ENCODE measurements at regions of chr20 and their contacts with region 1.

Region 1: DNA sequence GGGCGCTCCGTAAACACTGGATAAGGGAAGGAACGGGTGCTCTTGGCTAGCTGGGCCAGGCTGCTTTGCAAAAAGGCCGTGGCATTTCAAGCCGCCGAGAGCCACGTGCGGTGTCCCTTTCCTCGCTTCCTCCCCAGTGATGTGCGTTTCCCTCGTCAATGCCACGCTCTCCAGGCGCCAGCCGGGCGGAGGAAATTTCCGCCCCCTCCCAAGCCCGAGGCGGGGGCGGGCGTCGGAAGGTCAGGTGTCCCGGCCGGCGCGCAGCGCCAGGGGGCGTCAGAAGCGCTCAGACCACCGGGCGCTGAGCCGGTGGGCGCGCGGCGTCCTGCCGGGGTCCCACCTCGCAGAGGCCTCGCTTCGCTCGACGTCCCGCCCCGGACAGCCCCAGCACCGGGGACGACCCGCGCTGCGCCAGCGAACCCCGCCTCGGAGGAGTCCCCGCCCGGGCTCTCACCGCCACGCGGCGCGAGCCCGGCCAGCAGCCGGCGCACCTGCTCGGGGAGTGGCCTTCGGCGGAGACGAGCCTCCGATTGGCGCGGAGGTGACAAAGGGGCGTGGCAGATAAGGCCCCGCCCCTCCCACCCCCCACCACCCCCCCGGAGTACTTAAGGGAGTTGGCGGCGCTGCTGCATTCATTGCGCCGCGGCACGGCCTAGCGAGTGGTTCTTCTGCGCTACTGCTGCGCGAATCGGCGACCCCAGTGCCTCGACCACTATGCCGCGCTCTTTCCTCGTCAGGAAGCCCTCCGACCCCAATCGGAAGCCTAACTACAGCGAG is at the start of gene SNAI1:
- DNase-seq: peak; percentile 84 to 90 (median 87)
- ATAC-seq: peak; percentile 67 to 91 (median 85)
- H3K4me3 ChIP-seq: peak within 1 kb of the TSS; percentile 23 to 78 (median 60)
- H3K27ac ChIP-seq: peak within 1 kb of the TSS; percentile 3 to 86 (median 78)
- H3K4me1 ChIP-seq: peaks cover 0 to 60% (median 37%) of the 10 kb centered on the region in 12 donors
- H3K27me3 ChIP-seq: no peaks in the 10 kb centered on the region
- CTCF ChIP-seq: peak; percentile 23 to 85 (median 62)
- POLR2A ChIP-seq: peak in 1 of 2 donors; percentile 86
- total RNA-seq, gene SNAI1: 0.37 to 6.7 (median 1.6) TPM

Region 2: DNA sequence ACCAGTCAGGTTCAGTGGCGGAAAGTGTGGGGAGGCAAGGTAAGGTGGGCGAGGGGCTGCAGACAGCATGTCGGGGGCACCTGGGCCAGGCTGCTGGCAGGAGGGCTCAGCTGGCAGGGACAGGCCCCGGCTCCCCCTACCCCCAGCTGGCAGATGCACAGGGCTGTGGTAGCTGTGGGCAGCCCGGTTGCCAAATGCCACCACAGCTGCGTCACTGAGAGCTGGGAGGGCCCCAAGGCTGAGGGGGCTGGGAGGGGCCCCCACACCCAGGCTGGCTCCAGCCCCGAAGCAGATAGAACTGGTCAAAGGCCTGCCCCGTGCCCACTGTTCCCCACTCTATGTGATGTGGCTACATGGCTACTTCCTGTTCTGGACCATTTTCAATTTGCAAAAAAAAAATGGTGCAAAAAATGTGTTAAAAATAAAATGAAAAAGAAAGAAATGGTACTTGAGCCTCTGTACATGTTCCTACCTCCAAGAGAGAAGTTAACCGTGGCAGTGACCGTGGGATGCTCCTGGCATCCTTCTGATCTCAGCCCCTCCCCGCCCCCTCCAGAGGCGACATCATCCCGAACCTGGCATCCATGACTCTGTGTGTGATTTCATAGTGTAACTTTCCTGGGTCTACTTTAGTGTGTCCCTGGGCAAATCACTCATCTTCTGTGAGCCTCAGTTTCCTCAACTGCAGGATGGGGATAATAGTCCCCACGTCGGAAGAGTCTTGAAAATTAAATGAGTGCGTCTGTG is 66.1 kb after region 1 on chr20:
- intact Hi-C with region 1: loop called in 1 of 10 experiments (anchors 2 kb)
- DNase-seq: peak in 3 of 5 donors; percentile 26 to 59 (median 33)
- ATAC-seq: peak in 3 of 4 donors; percentile 20 to 57 (median 40)
- H3K4me3 ChIP-seq: no peak overlapping the region
- H3K27ac ChIP-seq: peak overlapping the region in 8 of 12 donors; percentile 31 to 90 (median 82)
- H3K4me1 ChIP-seq: peaks cover 3 to 51% (median 18%) of the 10 kb centered on the region in 12 donors
- H3K27me3 ChIP-seq: no peaks in the 10 kb centered on the region
- CTCF ChIP-seq: no peak
- POLR2A ChIP-seq: no peak

Region 3: GRCh38 chr20:50070991-50071888 is 88.7 kb after region 1 on chr20:
- intact Hi-C with region 1: loop called (anchors 1 to 2 kb)
- DNase-seq: peak; percentile 88 to 96 (median 90)
- ATAC-seq: peak; percentile 72 to 96 (median 92)
- H3K4me3 ChIP-seq: peak overlapping the region in 9 of 12 donors; percentile 30 to 50 (median 43)
- H3K27ac ChIP-seq: no peak overlapping the region
- H3K4me1 ChIP-seq: peaks cover 0 to 22% (median 8%) of the 10 kb centered on the region in 12 donors
- H3K27me3 ChIP-seq: no peaks in the 10 kb centered on the region
- CTCF ChIP-seq: peak; percentile 99 to 100 (median 100)
- POLR2A ChIP-seq: no peak

Region 4: GRCh38 chr20:50085452-50086365 is 103.2 kb after region 1 on chr20:
- intact Hi-C with region 1: loop called in 1 of 10 experiments (anchors 5 kb)
- DNase-seq: peak in 3 of 5 donors; percentile 38 to 53 (median 51)
- ATAC-seq: peak; percentile 62 to 76 (median 66)
- H3K4me3 ChIP-seq: peak overlapping the region in 9 of 12 donors; percentile 2 to 47 (median 33)
- H3K27ac ChIP-seq: peak overlapping the region in 10 of 12 donors; percentile 14 to 78 (median 58)
- H3K4me1 ChIP-seq: peaks cover 0 to 60% (median 14%) of the 10 kb centered on the region in 12 donors
- H3K27me3 ChIP-seq: no peaks in the 10 kb centered on the region
- CTCF ChIP-seq: peak; percentile 72 to 89 (median 80)
- POLR2A ChIP-seq: no peak

Region 5: GRCh38 chr20:50153485-50154377 is 171.2 kb after region 1 on chr20 and contains the start of gene PEDS1:
- intact Hi-C with region 1: no loop called
- DNase-seq: peak; percentile 94 to 97 (median 95)
- ATAC-seq: peak; percentile 95 to 98 (median 97)
- H3K4me3 ChIP-seq: peak within 1 kb of the TSS; percentile 37 to 100 (median 97)
- H3K27ac ChIP-seq: peak within 1 kb of the TSS; percentile 54 to 98 (median 94)
- H3K4me1 ChIP-seq: peaks cover 7 to 50% (median 39%) of the 10 kb centered on the region in 12 donors
- H3K27me3 ChIP-seq: no peaks in the 10 kb centered on the region
- CTCF ChIP-seq: peak in 1 of 12 donors; percentile 15
- POLR2A ChIP-seq: peak; percentile 74 to 87
- total RNA-seq, gene PEDS1: 13.7 to 37.4 (median 23.6) TPM

Region 6: DNA sequence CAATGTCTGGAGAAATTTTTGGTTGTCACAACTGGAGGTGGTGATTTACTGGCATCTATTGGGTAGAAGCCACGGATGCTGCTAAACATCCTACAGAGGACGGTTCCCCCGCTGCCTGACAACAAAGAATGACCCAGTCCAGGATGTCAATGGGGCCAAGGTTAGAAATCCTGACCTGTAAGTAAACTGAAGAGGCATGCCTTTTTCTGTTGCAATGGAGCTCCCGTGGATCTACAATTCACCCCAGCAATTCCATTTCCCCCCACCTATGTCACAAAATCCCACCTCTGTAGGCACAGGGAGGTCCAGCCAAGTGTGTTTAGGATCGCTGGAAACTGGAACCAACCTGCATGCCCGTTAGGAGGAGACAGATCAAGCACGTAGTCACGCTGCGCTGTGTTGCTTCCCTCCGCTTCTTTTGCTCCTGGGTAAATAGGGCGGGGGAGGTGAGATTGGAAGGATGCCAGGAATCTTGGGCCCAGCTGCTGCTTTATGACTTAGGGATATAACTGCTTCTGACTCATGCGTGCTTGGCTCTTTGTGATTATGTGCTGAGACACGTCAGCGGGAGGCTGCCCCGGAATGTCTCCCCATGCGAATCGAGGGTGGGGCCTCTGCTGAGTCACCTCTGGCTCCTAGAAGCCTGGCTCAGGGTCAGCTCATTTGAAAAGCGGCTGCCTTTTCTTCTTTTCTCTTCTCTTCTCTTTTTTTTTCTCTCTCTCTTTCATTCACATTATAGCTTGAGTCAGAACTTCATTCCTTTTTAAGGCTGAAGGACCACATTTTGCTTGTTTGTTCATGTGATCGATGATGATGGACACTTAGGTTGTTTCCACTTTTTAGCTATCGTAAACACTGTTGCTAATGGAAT is 183.4 kb after region 1 on chr20:
- intact Hi-C with region 1: loop called in 7 of 10 experiments (anchors 2 to 5 kb)
- DNase-seq: peak; percentile 95 to 99 (median 97)
- ATAC-seq: peak; percentile 97 to 99 (median 98)
- H3K4me3 ChIP-seq: peak overlapping the region in 11 of 12 donors; percentile 0 to 45 (median 34)
- H3K27ac ChIP-seq: peak overlapping the region; percentile 74 to 92 (median 89)
- H3K4me1 ChIP-seq: peaks cover 0 to 39% (median 17%) of the 10 kb centered on the region in 12 donors
- H3K27me3 ChIP-seq: no peaks in the 10 kb centered on the region
- CTCF ChIP-seq: peak in 1 of 12 donors; percentile 18
- POLR2A ChIP-seq: peak in 1 of 2 donors; percentile 50

Region 7: DNA sequence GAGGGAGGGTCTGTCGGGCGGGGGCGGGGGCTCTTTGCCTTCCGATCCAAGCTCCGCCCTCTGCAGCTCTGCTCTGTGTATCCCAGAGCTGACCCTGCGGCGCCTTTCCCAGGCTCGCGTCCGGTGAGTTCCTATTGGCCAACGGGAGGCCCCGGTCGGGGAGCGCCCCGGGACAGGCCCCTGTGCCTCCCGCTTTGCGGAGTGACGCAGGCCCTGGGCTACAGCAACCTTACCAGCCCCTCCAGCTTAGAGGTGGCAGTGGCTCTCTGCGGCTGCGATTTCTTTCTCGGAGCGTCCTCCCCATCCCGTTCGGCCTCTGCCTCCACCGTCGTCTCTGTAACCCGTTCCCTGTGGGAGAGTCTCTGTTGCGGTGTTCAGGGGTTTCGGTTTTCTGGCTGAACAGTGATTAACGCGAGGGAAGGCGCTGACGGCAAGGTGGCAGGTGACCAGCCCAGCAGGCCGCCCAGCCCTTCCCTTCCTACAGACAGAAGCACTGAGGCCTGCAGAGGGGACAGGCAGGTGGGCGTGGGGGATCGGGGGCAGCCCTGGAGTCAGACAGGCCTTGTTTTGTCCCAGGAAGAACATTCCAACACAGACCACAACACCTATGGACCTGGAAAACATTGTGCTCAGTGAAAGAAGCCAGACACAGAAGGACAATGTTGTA is 189.9 kb after region 1 on chr20:
- intact Hi-C with region 1: loop called in 9 of 10 experiments (anchors 2 to 5 kb)
- DNase-seq: peak; percentile 92 to 96 (median 95)
- ATAC-seq: peak; percentile 90 to 97 (median 95)
- H3K4me3 ChIP-seq: peak overlapping the region; percentile 50 to 75 (median 62)
- H3K27ac ChIP-seq: peak overlapping the region; percentile 75 to 95 (median 92)
- H3K4me1 ChIP-seq: peaks cover 0 to 31% (median 16%) of the 10 kb centered on the region in 12 donors
- H3K27me3 ChIP-seq: no peaks in the 10 kb centered on the region
- CTCF ChIP-seq: no peak
- POLR2A ChIP-seq: peak in 1 of 2 donors; percentile 82

Region 8: GRCh38 chr20:50179507-50180016 is 197.0 kb after region 1 on chr20:
- intact Hi-C with region 1: loop called in 6 of 10 experiments (anchors 2 to 5 kb)
- DNase-seq: no peak
- ATAC-seq: peak in 3 of 4 donors; percentile 32 to 37 (median 32)
- H3K4me3 ChIP-seq: no peak overlapping the region
- H3K27ac ChIP-seq: no peak overlapping the region
- H3K4me1 ChIP-seq: peaks cover 0 to 7% (median 0%) of the 10 kb centered on the region in 12 donors
- H3K27me3 ChIP-seq: no peaks in the 10 kb centered on the region
- CTCF ChIP-seq: peak in 8 of 12 donors; percentile 32 to 48 (median 34)
- POLR2A ChIP-seq: no peak